ENCODE measurements at regions of chr12 and their contacts with region 1.

Region 1: GRCh38 chr12:57011438-57012424 is 4.6 kb downstream of the TAC3 start:
- DNase-seq: no peak
- H3K4me3 Mint-ChIP-seq: peak overlapping the region; percentile 5
- H3K27ac Mint-ChIP-seq: no peak overlapping the region
- H3K4me1 Mint-ChIP-seq: peaks cover 36% of the 10 kb centered on the region
- H3K27me3 Mint-ChIP-seq: peaks cover 19% of the 10 kb centered on the region

Region 2: GRCh38 chr12:56839915-56840325 is 171.8 kb before region 1 on chr12:
- intact Hi-C with region 1: no loop called
- DNase-seq: peak; percentile 2
- H3K4me3 Mint-ChIP-seq: no peak overlapping the region
- H3K27ac Mint-ChIP-seq: no peak overlapping the region
- H3K4me1 Mint-ChIP-seq: peaks cover 14% of the 10 kb centered on the region
- H3K27me3 Mint-ChIP-seq: peaks cover 2% of the 10 kb centered on the region

Region 3: DNA sequence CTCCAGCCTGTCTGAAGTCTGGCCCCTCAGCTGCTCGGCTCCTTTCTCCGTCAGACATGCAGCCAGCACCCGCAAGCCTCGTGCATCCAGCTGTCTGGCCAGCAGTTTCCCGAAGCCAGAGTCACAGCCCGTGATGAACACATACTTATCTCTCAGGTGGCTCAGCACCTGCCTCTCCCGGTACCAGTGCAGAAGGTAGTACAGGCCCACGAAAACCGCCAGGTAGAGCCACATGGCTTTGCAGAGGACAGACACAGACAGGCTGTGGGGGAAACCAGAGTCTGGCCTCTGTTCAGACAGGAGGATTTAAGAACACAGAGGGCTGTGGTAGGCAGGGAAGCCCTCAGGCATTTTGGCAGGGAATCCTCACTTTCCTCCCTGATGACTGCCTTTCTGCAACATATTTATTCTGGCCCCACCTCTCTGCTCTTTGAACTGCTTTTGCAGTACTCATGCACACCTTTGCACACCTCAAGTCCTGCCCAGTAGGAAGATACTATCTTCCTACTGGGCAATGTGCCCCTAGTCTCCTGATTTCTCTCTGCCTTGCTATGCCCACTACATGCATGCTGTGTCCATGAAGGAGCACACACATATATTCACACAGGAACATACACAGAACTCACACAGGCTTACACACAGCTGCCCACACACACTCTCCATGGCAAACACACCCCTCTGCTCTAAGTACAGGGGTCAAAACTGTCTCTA is 54.3 kb before region 1 on chr12 and contains the start of gene RDH16:
- intact Hi-C with region 1: no loop called
- DNase-seq: no peak
- H3K4me3 Mint-ChIP-seq: no peak within 1 kb of the TSS
- H3K27ac Mint-ChIP-seq: no peak within 1 kb of the TSS
- H3K4me1 Mint-ChIP-seq: no peaks in the 10 kb centered on the region
- H3K27me3 Mint-ChIP-seq: peaks cover 11% of the 10 kb centered on the region
- total RNA-seq, gene RDH16: 0.23 and 0.29 TPM in 2 replicates

Region 4: DNA sequence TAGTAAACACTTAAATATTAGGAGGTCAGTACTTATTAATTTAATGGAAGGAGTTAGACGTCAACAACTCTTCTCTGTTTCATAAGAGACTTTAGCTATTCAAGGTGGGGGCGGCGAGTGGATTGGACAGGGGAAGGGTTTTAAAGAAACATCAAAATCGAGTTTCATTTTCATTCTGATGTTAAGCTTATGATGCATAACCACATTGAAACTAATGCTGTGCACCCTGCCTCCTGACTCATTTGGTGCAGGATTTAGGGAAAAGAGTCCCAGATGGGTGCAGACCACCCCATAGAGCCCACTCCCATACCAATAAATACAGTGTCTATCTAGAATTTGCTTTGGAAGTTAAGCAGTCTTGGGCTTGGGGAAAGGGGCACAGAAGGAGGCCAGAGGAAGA is 12.8 kb before region 1 on chr12:
- intact Hi-C with region 1: loop called (anchors 1 kb)
- DNase-seq: peak; percentile 22
- H3K4me3 Mint-ChIP-seq: peak overlapping the region; percentile 75
- H3K27ac Mint-ChIP-seq: peak overlapping the region; percentile 89
- H3K4me1 Mint-ChIP-seq: peaks cover 40% of the 10 kb centered on the region
- H3K27me3 Mint-ChIP-seq: no peaks in the 10 kb centered on the region

Region 5: GRCh38 chr12:57046947-57047890 is 35.5 kb after region 1 on chr12:
- intact Hi-C with region 1: loop called (anchors 1 kb)
- DNase-seq: peak; percentile 49
- H3K4me3 Mint-ChIP-seq: peak overlapping the region; percentile 34
- H3K27ac Mint-ChIP-seq: peak overlapping the region; percentile 74
- H3K4me1 Mint-ChIP-seq: peaks cover 40% of the 10 kb centered on the region
- H3K27me3 Mint-ChIP-seq: peaks cover 2% of the 10 kb centered on the region

Region 6: GRCh38 chr12:57299514-57300016 is 287.8 kb after region 1 on chr12:
- intact Hi-C with region 1: no loop called
- DNase-seq: no peak
- H3K4me3 Mint-ChIP-seq: no peak overlapping the region
- H3K27ac Mint-ChIP-seq: no peak overlapping the region
- H3K4me1 Mint-ChIP-seq: no peaks in the 10 kb centered on the region
- H3K27me3 Mint-ChIP-seq: no peaks in the 10 kb centered on the region

Region 7: DNA sequence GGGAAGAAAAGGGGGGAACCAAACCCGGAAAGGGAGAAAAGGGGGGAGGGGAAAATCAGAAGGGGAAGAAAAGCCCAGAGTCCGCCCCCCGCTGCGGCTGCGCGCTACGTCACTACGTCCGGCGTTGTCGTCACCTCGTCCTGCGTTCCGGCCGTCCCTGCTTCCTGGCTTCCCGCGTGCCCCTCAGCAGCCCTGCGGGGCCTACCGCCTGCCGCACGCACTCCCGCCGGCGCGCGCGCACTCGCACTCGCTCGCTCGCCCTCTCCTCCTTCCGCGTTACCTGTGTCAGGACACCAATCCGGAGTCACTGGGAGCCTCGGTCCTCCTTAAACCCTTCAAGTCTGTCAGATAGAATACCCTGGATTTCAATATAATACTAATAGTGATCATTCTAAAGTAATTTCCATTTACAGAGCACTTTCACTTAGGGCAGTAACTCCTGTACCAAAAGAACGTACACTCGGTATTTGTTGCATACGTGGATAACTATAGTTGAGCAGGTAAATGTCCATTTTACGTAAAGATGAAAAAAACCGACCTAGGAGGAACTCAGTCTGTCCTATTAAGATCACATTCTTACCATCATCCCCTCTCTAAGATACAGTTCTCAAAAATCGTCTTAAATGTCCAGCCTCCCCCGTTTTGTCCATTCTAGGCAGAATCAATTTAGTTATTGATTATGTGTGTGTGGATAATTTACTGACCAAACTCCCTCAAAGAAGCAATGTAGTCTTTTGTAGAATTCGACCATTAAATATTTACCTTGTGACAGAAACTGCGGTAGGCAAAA is 419.4 kb after region 1 on chr12 and contains the start of gene R3HDM2:
- intact Hi-C with region 1: no loop called
- DNase-seq: peak; percentile 90
- H3K4me3 Mint-ChIP-seq: peak within 1 kb of the TSS; percentile 98
- H3K27ac Mint-ChIP-seq: peak within 1 kb of the TSS; percentile 99
- H3K4me1 Mint-ChIP-seq: peaks cover 34% of the 10 kb centered on the region
- H3K27me3 Mint-ChIP-seq: no peaks in the 10 kb centered on the region
- total RNA-seq, gene R3HDM2: 39.0 and 44.6 TPM in 2 replicates

Measured in activated T-helper 1 cell treated with anti-CD3 and anti-CD28 coated beads, Interleukin-12 subunit alpha, Interleukin-12 subunit beta, Interleukin-2, Interleukin-4 antibody, amounts not matched to agents 30 ng/mL and 10 ng/mL and 1 ng/mL, durations not matched to agents 14 hours and 24 hours and 36 hours (primary cell).